Vagina (tissue), 2 donors: ENCODE measurements at regions of chrX and their contacts with region 1.

Region 1: DNA sequence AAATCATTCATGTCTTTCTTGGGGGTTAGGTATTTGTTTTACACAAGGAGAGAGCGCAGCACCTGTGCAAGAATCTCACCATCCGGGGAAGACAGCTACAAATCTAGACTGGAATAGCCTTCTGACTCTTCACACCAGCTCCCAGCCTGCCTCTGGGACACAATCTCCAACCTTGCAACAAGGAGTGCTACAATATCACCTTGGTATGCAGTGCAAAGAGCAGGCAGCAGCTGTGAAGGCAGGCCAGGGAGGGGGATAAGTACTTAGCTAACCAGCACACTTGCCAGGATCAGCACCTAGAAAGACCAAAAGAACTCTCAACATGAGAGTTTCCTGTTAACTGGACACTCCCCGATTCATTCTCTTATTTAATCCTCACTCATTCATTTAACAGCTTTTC is 235.3 kb downstream of the AR start:
- DNase-seq: no peak
- H3K4me3 ChIP-seq: no peak overlapping the region
- H3K27ac ChIP-seq: no peak overlapping the region
- H3K4me1 ChIP-seq: peaks cover 19% of the 10 kb centered on the region
- H3K27me3 ChIP-seq: no peaks in the 10 kb centered on the region
- CTCF ChIP-seq: no peak
- POLR2A ChIP-seq: no peak

Region 2: GRCh38 chrX:67436867-67437266 is 342.2 kb before region 1 on chrX:
- intact Hi-C with region 1: no loop called
- DNase-seq: no peak
- H3K4me3 ChIP-seq: no peak overlapping the region
- H3K27ac ChIP-seq: no peak overlapping the region
- H3K4me1 ChIP-seq: no peaks in the 10 kb centered on the region
- H3K27me3 ChIP-seq: no peaks in the 10 kb centered on the region
- CTCF ChIP-seq: no peak
- POLR2A ChIP-seq: no peak

Region 3: GRCh38 chrX:67543818-67544217 is 235.3 kb before region 1 on chrX and contains the start of gene AR:
- intact Hi-C with region 1: loop called (anchors 10 kb)
- DNase-seq: no peak
- H3K4me3 ChIP-seq: peak within 1 kb of the TSS; percentile 55 to 65
- H3K27ac ChIP-seq: peak within 1 kb of the TSS; percentile 89
- H3K4me1 ChIP-seq: no peaks in the 10 kb centered on the region
- H3K27me3 ChIP-seq: peaks cover 4% of the 10 kb centered on the region
- CTCF ChIP-seq: no peak
- POLR2A ChIP-seq: peak in 1 of 2 donors; percentile 51
- total RNA-seq, gene AR: 35.1 TPM

Region 4: GRCh38 chrX:69538321-69538876 is 1759.3 kb after region 1 on chrX:
- intact Hi-C with region 1: no loop called
- DNase-seq: no peak
- H3K4me3 ChIP-seq: peak overlapping the region; percentile 31 to 44
- H3K27ac ChIP-seq: no peak overlapping the region
- H3K4me1 ChIP-seq: no peaks in the 10 kb centered on the region
- H3K27me3 ChIP-seq: no peaks in the 10 kb centered on the region
- CTCF ChIP-seq: peak; percentile 46 to 70 (median 58)
- POLR2A ChIP-seq: no peak